MCF 10A (cell line): ENCODE measurements at regions of chr2 and their contacts with region 1.

Region 1: DNA sequence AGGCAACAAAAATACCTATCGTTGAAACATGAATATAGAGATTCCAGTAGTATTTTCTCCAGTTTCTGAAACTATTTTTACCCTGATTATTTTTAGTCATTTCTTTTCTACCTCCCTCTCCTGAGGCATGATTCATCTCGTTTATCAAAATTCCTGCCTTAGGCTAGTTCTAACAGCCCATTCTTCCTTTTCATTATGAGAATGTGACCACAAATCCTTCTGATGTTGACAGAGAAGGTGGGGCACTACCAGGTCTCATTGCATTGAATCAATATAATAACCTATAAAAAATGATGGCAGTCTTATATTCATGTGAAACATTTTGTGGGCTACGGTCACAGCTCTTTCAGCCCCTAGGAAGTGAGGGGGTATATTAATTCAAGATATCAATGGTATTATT is 406.4 kb upstream of the UBE2E3 start:
- DNase-seq: peak; percentile 58
- H3K4me3 Mint-ChIP-seq: no peak overlapping the region
- H3K27ac Mint-ChIP-seq: peak overlapping the region; percentile 3
- H3K4me1 Mint-ChIP-seq: peaks cover 23% of the 10 kb centered on the region
- H3K27me3 Mint-ChIP-seq: no peaks in the 10 kb centered on the region
- CTCF ChIP-seq: no peak

Region 2: DNA sequence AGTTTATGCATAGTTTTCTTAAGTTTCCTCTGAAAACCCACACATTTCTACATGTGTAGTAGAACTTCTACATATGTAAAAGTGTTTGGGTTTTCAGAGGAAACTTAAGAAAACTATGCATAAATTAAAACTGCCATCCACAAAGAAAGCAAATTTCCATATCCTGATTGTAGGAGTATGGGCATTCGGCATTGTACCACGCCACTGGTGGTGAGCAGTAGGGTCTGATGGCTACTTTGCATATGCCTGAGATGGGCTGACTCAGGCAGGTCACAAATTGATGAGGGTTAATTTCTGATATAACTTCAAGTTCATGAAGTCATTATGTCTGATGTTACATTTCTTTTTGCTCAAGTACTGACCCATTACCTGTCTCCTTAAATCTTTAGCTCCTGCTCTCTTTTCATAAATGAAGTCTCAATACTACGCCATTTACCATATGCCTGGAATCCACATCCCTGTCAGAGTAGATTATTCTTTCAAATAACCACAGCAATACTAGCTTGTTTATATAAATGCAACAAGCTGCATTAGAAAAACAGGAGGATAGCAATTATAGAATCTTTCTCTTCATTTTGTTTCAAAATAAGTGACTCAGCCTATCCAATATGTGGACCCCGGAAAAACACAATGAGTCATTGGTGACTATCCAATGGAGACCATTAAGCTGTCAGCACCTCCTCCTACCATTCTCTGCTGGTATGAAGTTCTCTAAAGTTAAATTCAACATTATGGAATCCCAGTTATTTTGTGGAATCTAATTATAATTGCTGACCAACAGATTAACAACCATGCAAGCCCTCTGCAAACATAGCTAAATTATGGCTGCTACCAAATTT is 51.3 kb after region 1 on chr2:
- CTCF ChIA-PET with region 1: no interaction called
- POLR2A ChIA-PET with region 1: no interaction called
- intact Hi-C with region 1: loop called (anchors 10 kb)
- DNase-seq: peak; percentile 61
- H3K4me3 Mint-ChIP-seq: no peak overlapping the region
- H3K27ac Mint-ChIP-seq: no peak overlapping the region
- H3K4me1 Mint-ChIP-seq: peaks cover 16% of the 10 kb centered on the region
- H3K27me3 Mint-ChIP-seq: no peaks in the 10 kb centered on the region
- CTCF ChIP-seq: no peak

Region 3: DNA sequence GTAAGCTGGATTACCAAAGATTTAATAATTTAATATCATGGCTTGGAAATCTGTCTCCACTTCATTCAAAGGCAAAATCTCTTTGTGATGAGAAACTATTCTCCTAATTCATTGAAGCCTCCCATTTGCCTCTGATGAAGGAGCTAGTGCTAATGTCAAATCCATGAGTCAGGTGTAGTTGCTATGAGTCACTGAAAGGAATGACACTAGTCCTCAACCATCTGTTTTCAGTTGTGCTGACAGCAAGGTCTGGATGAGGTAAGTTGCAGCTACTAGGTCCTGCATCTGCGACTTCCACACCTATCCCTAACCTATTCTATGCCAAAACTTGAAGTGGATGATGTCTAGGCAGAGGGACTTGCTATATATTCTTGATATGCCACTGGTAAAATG is 82.5 kb after region 1 on chr2:
- CTCF ChIA-PET with region 1: no interaction called
- POLR2A ChIA-PET with region 1: no interaction called
- intact Hi-C with region 1: no loop called
- DNase-seq: peak; percentile 79
- H3K4me3 Mint-ChIP-seq: no peak overlapping the region
- H3K27ac Mint-ChIP-seq: no peak overlapping the region
- H3K4me1 Mint-ChIP-seq: peaks cover 13% of the 10 kb centered on the region
- H3K27me3 Mint-ChIP-seq: no peaks in the 10 kb centered on the region
- CTCF ChIP-seq: no peak

Region 4: GRCh38 chr2:180679693-180680092 is 105.7 kb after region 1 on chr2:
- CTCF ChIA-PET with region 1: no interaction called
- POLR2A ChIA-PET with region 1: no interaction called
- intact Hi-C with region 1: no loop called
- DNase-seq: no peak
- H3K4me3 Mint-ChIP-seq: no peak overlapping the region
- H3K27ac Mint-ChIP-seq: no peak overlapping the region
- H3K4me1 Mint-ChIP-seq: peaks cover 23% of the 10 kb centered on the region
- H3K27me3 Mint-ChIP-seq: no peaks in the 10 kb centered on the region
- CTCF ChIP-seq: no peak

Region 5: GRCh38 chr2:180742809-180743208 is 168.9 kb after region 1 on chr2:
- CTCF ChIA-PET with region 1: no interaction called
- POLR2A ChIA-PET with region 1: no interaction called
- intact Hi-C with region 1: no loop called
- DNase-seq: peak; percentile 76
- H3K4me3 Mint-ChIP-seq: no peak overlapping the region
- H3K27ac Mint-ChIP-seq: peak overlapping the region; percentile 83
- H3K4me1 Mint-ChIP-seq: peaks cover 23% of the 10 kb centered on the region
- H3K27me3 Mint-ChIP-seq: no peaks in the 10 kb centered on the region
- CTCF ChIP-seq: no peak

Region 6: DNA sequence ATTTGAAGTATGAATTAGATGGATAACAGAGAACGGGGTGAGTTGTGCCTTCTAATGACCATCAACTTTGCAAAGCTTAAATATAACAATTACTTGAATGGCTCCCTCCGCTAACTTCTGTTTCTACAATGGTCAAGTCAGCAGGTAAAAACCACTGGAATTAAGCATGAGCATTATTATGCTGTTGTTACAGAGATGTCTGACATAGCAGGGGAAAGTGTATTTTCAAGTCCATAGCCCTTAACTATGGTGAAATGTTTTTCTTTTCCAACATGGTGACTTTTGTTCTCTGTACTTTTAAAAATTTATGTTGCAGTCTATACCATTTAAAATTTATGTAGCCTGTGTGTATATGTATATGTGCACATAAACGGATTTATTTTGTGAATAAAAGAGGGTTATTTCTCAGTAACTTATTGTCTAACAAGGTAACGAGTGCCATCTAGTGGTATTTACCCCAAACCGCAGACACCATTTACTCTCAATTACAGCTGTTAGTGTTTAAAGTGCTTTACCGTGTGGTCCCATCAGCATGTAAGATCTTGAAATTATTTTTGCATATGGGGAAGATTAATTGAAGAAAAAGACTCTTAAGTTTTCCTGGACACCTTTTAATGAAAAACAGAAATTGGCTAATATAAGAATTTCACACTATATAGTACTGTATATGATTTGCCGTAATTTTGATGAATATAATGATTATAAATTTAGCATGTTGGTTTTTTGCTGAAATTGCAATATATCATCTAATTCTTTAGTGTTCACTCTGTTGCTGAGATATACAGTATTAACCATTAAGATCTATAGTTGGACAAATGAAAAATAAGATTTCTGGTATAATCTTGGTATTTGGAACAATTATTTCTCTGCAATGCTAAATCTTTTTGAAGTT is 484.7 kb after region 1 on chr2:
- CTCF ChIA-PET with region 1: no interaction called
- POLR2A ChIA-PET with region 1: no interaction called
- intact Hi-C with region 1: no loop called
- DNase-seq: peak; percentile 53
- H3K4me3 Mint-ChIP-seq: no peak overlapping the region
- H3K27ac Mint-ChIP-seq: no peak overlapping the region
- H3K4me1 Mint-ChIP-seq: peaks cover 16% of the 10 kb centered on the region
- H3K27me3 Mint-ChIP-seq: no peaks in the 10 kb centered on the region
- CTCF ChIP-seq: peak; percentile 80